Mammary epithelial cell (primary cell): ENCODE measurements at regions of chr9 and their contacts with region 1.

Region 1: DNA sequence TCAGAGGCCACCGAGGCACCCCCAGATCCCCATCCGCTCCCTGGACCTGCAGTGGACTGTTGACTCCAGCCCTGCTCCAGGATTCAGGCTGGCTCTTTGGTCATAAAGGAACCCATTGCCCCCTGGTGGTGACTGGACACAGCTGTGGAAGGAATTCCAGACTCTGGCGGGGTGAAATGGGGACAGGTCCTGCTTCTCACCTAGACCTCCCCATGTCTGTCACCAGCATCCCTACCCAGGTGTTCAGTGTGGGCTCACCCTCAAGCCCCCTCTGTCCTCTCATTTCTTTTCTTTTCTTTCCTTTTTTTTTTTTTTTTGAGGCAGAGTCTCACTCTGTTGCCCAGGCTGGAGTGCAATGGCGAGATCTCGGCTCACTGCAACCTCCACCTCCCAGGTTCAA is 25.5 kb upstream of the STXBP1 start:
- DNase-seq: peak; percentile 56
- H3K4me3 ChIP-seq: no peak overlapping the region
- H3K27ac ChIP-seq: no peak overlapping the region
- H3K4me1 ChIP-seq: peaks cover 15% of the 10 kb centered on the region
- H3K27me3 ChIP-seq: no peaks in the 10 kb centered on the region
- CTCF ChIP-seq: peak; percentile 89 to 96

Region 2: GRCh38 chr9:127214421-127215267 is 371.9 kb before region 1 on chr9:
- CTCF ChIA-PET with region 1: no interaction called
- dilution Hi-C with region 1: no loop called
- in situ Hi-C with region 1: no loop called
- intact Hi-C with region 1: loop called (anchors 5 kb)
- DNase-seq: peak; percentile 52
- H3K4me3 ChIP-seq: no peak overlapping the region
- H3K27ac ChIP-seq: no peak overlapping the region
- H3K4me1 ChIP-seq: no peaks in the 10 kb centered on the region
- H3K27me3 ChIP-seq: no peaks in the 10 kb centered on the region
- CTCF ChIP-seq: peak; percentile 85 to 92

Region 3: GRCh38 chr9:127450830-127451724 is 135.5 kb before region 1 on chr9 and contains the starts of genes LRSAM1 and RPL12:
- CTCF ChIA-PET with region 1: no interaction called
- dilution Hi-C with region 1: no loop called
- in situ Hi-C with region 1: no loop called
- intact Hi-C with region 1: loop called (anchors 2 kb)
- DNase-seq: peak; percentile 90
- H3K4me3 ChIP-seq: peak within 1 kb of the TSS; percentile 79 to 91 (median 90)
- H3K27ac ChIP-seq: peak within 1 kb of the TSS; percentile 80
- H3K4me1 ChIP-seq: peaks cover 26% of the 10 kb centered on the region
- H3K27me3 ChIP-seq: no peaks in the 10 kb centered on the region
- CTCF ChIP-seq: peak in 1 of 2 donors; percentile 3
- total RNA-seq, gene LRSAM1: 15.5 to 20.6 TPM
- total RNA-seq, gene RPL12: 1,316 to 1,441 TPM

Region 4: DNA sequence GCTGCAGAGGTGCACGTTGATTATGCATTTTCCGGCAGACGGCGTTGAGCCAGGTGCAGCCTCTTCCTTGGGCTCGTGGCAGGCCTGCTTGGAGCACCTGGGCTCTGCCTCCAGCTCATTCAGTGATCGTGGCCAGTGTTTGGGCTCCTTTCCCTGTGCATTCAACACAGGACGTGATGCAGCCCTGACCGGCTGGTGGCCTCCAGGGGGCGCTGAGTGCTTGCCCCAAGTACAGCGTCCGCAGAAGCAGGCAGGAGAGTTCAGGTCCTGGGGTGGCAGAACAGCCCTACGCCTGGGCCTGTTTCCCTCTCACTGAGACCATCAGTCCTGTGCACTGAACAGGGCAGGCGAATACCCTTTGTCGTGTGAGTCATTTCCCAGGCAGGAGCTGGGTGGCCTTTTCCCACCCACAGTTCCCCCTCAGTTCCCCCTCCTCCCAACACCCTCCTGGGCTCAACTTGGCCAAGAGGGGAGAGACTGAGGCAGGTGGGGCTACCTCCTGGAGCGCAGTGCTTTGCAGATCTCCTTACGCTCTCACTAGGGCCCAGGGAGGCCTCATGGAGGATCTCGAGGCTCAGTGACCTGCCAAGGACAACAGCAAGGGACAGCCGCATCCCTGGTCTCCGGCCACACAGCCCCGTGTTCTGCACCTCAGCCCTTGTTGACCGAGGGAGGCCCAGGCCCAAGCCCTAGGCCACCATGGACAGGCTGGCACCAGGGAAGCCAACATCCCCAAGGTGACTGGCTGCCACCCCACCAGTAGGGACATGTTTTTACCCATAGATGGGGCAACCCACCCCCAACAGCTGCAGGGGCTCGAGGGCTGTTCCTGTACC is 82.4 kb before region 1 on chr9:
- CTCF ChIA-PET with region 1: interaction called, 3 read pairs
- dilution Hi-C with region 1: no loop called
- in situ Hi-C with region 1: loop called in 1 of 2 experiments (anchors 5 kb)
- intact Hi-C with region 1: loop called (anchors 1 kb)
- DNase-seq: peak; percentile 59
- H3K4me3 ChIP-seq: no peak overlapping the region
- H3K27ac ChIP-seq: no peak overlapping the region
- H3K4me1 ChIP-seq: peaks cover 9% of the 10 kb centered on the region
- H3K27me3 ChIP-seq: no peaks in the 10 kb centered on the region
- CTCF ChIP-seq: peak; percentile 77 to 86

Region 5: GRCh38 chr9:127545196-127546124 is 41.1 kb before region 1 on chr9:
- CTCF ChIA-PET with region 1: no interaction called
- dilution Hi-C with region 1: loop called (anchors 5 kb)
- in situ Hi-C with region 1: no loop called
- intact Hi-C with region 1: no loop called
- DNase-seq: peak; percentile 89
- H3K4me3 ChIP-seq: no peak overlapping the region
- H3K27ac ChIP-seq: peak overlapping the region; percentile 63
- H3K4me1 ChIP-seq: peaks cover 65% of the 10 kb centered on the region
- H3K27me3 ChIP-seq: no peaks in the 10 kb centered on the region
- CTCF ChIP-seq: no peak

Region 6: GRCh38 chr9:127608104-127608966 is 21.8 kb after region 1 on chr9:
- CTCF ChIA-PET with region 1: no interaction called
- dilution Hi-C with region 1: no loop called
- in situ Hi-C with region 1: no loop called
- intact Hi-C with region 1: no loop called
- DNase-seq: peak; percentile 74
- H3K4me3 ChIP-seq: peak overlapping the region; percentile 20 to 51 (median 44)
- H3K27ac ChIP-seq: no peak overlapping the region
- H3K4me1 ChIP-seq: peaks cover 21% of the 10 kb centered on the region
- H3K27me3 ChIP-seq: no peaks in the 10 kb centered on the region
- CTCF ChIP-seq: no peak

Region 7: GRCh38 chr9:127715394-127716337 is 129.1 kb after region 1 on chr9 and contains the starts of genes PTRH1 and TTC16:
- CTCF ChIA-PET with region 1: no interaction called
- dilution Hi-C with region 1: loop called (anchors 10 kb)
- in situ Hi-C with region 1: no loop called
- intact Hi-C with region 1: no loop called
- DNase-seq: peak; percentile 95
- H3K4me3 ChIP-seq: peak within 1 kb of the TSS; percentile 67 to 92 (median 88)
- H3K27ac ChIP-seq: peak within 1 kb of the TSS; percentile 85
- H3K4me1 ChIP-seq: peaks cover 14% of the 10 kb centered on the region
- H3K27me3 ChIP-seq: no peaks in the 10 kb centered on the region
- CTCF ChIP-seq: no peak
- total RNA-seq, gene PTRH1: 18.2 to 32.2 TPM
- total RNA-seq, gene TTC16: under 0.01 to 0.21 TPM

Region 8: DNA sequence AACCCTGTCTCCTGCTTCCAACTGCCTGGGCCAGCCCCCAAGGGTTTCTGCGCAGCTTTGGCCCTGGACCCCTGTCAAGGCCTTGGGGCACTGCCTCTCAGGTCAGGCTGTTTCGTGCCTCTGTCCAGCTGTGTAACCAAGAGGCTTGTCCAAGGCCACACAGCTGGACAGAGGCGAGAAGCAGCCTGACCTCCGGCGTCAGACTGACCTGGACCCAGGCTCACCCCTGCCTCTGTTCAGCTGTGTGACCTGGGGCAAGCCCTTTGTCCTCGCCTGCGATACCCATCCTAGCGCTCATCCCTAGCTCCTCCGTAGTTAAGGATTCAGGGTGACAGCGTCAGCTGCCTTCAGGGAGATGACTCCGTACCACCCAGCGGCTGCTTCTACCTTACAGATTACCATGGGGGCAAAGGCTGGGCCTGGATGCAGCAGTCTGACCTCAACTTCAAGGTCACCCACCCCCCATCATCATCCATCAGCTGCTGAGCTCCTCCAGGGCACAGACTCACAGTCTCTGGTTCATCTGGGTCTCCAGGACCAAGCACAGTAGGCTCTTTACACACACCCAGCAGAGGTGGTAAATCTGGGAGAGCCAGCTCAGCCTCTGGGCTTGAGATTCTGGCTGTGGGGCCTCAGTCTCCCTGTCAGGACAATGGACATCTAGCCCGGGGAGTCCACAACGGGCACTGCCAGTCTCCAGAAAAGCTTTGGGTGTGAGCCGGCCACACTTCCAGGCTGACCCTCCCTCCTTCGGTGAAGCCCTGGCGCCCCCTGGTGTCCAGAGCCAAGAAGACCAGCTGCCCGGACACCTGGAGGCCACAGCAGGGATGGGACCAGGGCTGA is 283.0 kb after region 1 on chr9:
- CTCF ChIA-PET with region 1: no interaction called
- dilution Hi-C with region 1: loop called (anchors 5 kb)
- in situ Hi-C with region 1: no loop called
- intact Hi-C with region 1: loop called (anchors 1 kb)
- DNase-seq: peak; percentile 67
- H3K4me3 ChIP-seq: no peak overlapping the region
- H3K27ac ChIP-seq: no peak overlapping the region
- H3K4me1 ChIP-seq: peaks cover 11% of the 10 kb centered on the region
- H3K27me3 ChIP-seq: no peaks in the 10 kb centered on the region
- CTCF ChIP-seq: peak; percentile 76 to 89